Activated CD4-positive, alpha-beta T cell treated with anti-CD3 and anti-CD28 coated beads for 36 hours (primary cell): ENCODE measurements at regions of chr12 and their contacts with region 1.

Region 1: GRCh38 chr12:6890789-6891645 is 13.6 kb upstream of the LRRC23 start:
- DNase-seq: peak; percentile 100
- ATAC-seq: peak; percentile 94
- H3K4me3 Mint-ChIP-seq: peak overlapping the region; percentile 87
- H3K27ac Mint-ChIP-seq: peak overlapping the region; percentile 94
- H3K4me1 Mint-ChIP-seq: peaks cover 12% of the 10 kb centered on the region
- H3K27me3 Mint-ChIP-seq: no peaks in the 10 kb centered on the region

Region 2: GRCh38 chr12:6723607-6724396 is 167.2 kb before region 1 on chr12 and contains the start of gene COPS7A:
- CTCF ChIA-PET with region 1: interaction called, 7 read pairs
- POLR2A ChIA-PET with region 1: no interaction called
- intact Hi-C with region 1: loop called in 1 of 2 experiments (anchors 1 kb)
- DNase-seq: peak; percentile 98
- ATAC-seq: peak; percentile 96
- H3K4me3 Mint-ChIP-seq: peak within 1 kb of the TSS; percentile 80
- H3K27ac Mint-ChIP-seq: peak within 1 kb of the TSS; percentile 97
- H3K4me1 Mint-ChIP-seq: peaks cover 18% of the 10 kb centered on the region
- H3K27me3 Mint-ChIP-seq: no peaks in the 10 kb centered on the region
- total RNA-seq, gene COPS7A: 38.3 to 41.6 TPM

Region 3: DNA sequence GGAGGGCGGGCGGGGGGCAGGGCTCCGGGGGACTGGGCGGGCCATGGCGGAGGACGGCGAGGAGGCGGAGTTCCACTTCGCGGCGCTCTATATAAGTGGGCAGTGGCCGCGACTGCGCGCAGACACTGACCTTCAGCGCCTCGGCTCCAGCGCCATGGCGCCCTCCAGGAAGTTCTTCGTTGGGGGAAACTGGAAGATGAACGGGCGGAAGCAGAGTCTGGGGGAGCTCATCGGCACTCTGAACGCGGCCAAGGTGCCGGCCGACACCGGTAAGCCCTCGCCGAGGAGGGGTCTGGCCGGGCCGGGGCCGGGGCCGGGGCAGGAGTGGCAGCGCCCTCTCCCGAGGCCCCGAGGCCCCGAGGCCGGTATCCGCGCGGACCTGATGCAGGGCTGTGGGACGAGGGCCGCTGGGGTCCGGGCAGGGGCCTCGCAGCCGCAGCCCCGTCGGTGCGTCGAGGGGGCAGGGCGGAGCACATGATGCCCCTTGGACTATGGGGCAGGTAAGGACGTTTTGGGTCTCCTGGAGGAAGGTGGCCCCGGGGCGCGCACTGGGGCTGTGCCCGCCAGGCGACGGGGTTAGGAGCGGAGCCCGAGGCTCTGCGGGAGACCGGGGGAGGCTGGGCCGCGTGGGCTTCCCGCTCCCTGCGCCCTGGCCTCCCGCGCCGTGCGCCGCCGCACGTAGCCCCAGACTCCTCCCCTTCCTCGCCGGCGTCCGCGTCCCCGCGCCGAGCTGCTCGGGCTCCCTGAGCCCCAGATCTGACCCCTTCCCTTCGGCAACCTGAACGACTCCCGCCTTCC is 23.4 kb before region 1 on chr12 and contains the start of gene TPI1:
- CTCF ChIA-PET with region 1: interaction called, 38 read pairs
- POLR2A ChIA-PET with region 1: interaction called, 15 read pairs
- intact Hi-C with region 1: no loop called
- DNase-seq: peak; percentile 91
- ATAC-seq: peak; percentile 68
- H3K4me3 Mint-ChIP-seq: peak within 1 kb of the TSS; percentile 93
- H3K27ac Mint-ChIP-seq: peak within 1 kb of the TSS; percentile 95
- H3K4me1 Mint-ChIP-seq: peaks cover 47% of the 10 kb centered on the region
- H3K27me3 Mint-ChIP-seq: no peaks in the 10 kb centered on the region
- total RNA-seq, gene TPI1: 1,824 to 2,753 TPM

Region 4: GRCh38 chr12:6904280-6905278 is 13.6 kb after region 1 on chr12 and contains the start of gene LRRC23:
- CTCF ChIA-PET with region 1: interaction called, 9 read pairs
- POLR2A ChIA-PET with region 1: no interaction called
- intact Hi-C with region 1: loop called (anchors 1 kb)
- DNase-seq: peak; percentile 99
- ATAC-seq: peak; percentile 97
- H3K4me3 Mint-ChIP-seq: no peak within 1 kb of the TSS
- H3K27ac Mint-ChIP-seq: no peak within 1 kb of the TSS
- H3K4me1 Mint-ChIP-seq: peaks cover 14% of the 10 kb centered on the region
- H3K27me3 Mint-ChIP-seq: no peaks in the 10 kb centered on the region
- total RNA-seq, gene LRRC23: 6.4 to 7.0 TPM

Region 5: DNA sequence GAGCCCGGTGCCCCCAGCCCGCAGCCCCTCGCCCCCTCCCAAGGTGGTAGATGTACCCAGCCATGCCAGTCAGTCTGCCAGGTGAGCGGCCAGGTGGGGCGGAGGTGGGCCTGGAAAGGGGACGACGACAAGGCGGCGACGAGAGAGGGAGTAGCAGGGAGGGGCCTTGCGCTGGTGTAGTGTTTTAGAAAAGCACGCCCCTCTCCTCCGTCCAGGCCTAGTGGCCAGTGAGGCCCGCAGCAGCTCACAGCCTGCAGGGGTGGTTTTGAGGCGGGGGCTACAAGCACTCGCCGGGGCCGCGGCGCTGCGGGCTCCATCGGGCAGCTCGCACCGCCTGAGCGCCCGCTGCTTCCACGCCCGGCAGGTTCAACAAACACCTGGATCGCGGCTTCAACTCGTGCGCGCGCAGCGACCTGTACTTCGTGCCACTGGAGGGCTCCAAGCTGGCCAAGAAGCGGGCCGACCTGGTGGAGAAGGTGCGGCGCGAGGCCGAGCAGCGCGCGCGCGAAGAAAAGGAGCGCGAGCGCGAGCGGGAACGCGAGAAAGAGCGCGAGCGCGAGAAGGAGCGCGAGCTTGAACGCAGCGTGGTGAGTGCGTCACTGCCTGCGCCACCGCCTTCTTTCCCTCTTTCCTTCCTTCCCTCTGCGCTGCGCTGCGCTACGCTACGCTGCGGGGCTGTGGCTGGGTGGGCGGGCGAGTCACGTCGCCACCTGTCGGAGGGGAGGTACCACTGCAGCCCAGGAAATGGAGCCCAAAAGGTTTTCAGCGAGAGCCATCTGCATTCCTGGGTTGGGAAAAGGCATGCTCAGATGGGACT is 46.7 kb after region 1 on chr12:
- CTCF ChIA-PET with region 1: interaction called, 3 read pairs
- POLR2A ChIA-PET with region 1: interaction called, 4 read pairs
- intact Hi-C with region 1: loop called in 1 of 2 experiments (anchors 1 kb)
- DNase-seq: peak; percentile 97
- ATAC-seq: peak; percentile 93
- H3K4me3 Mint-ChIP-seq: peak overlapping the region; percentile 83
- H3K27ac Mint-ChIP-seq: peak overlapping the region; percentile 96
- H3K4me1 Mint-ChIP-seq: peaks cover 52% of the 10 kb centered on the region
- H3K27me3 Mint-ChIP-seq: no peaks in the 10 kb centered on the region

Region 6: GRCh38 chr12:7018350-7019042 is 127.5 kb after region 1 on chr12 and contains the start of gene LPCAT3:
- CTCF ChIA-PET with region 1: no interaction called
- POLR2A ChIA-PET with region 1: no interaction called
- intact Hi-C with region 1: loop called in 1 of 2 experiments (anchors 1 kb)
- DNase-seq: peak; percentile 98
- ATAC-seq: peak; percentile 98
- H3K4me3 Mint-ChIP-seq: peak within 1 kb of the TSS; percentile 83
- H3K27ac Mint-ChIP-seq: peak within 1 kb of the TSS; percentile 80
- H3K4me1 Mint-ChIP-seq: peaks cover 29% of the 10 kb centered on the region
- H3K27me3 Mint-ChIP-seq: no peaks in the 10 kb centered on the region
- total RNA-seq, gene LPCAT3: 20.8 to 28.0 TPM